Mucosa of descending colon (tissue), 3 donors: ENCODE measurements at regions of chr14 and their contacts with region 1.

Region 1: DNA sequence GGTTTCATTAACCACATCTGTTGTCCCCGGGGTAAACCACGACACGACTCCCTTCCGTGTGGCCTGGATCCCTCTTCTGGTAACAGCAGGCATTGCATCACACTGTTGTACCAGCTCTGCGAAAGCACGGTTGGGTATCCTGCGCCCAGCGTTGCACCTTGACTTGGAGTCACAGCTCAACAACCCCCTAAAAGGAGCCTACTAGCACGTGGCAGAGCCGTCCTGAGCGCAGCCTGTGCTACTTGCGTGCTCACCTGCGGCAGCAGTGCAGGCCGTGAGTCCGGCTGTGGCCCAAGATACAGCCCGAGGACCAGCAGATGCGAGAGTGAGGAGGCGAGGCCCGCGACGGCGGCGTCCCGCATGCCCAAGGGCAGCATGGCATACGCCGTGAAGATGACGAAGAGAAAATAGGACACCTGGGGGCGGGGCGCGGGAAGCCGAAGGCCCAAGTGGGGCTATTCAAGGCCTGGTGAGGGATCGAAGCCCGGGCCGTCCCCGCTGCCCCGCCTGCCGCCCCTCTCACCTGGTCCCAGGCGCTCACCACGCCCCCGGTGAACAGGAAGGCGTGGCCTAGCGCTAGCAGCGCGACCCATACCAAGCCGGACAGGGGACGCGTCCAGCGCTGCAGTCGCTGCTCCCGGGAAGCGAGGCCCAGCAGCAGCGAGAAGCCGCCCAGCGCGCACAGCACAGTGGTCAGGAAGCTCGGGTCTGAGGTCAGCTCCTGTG is 2.4 kb downstream of the ADCY4 start:
- DNase-seq: peak; percentile 76 to 87 (median 80)
- ATAC-seq: peak; percentile 75
- H3K4me3 ChIP-seq: no peak overlapping the region
- H3K4me1 ChIP-seq: peaks cover 36% of the 10 kb centered on the region
- CTCF ChIP-seq: peak; percentile 60

Region 2: GRCh38 chr14:23776288-23776687 is 556.1 kb before region 1 on chr14:
- intact Hi-C with region 1: no loop called
- DNase-seq: no peak
- ATAC-seq: peak; percentile 49
- H3K4me3 ChIP-seq: no peak overlapping the region
- H3K4me1 ChIP-seq: no peaks in the 10 kb centered on the region
- CTCF ChIP-seq: no peak

Region 3: GRCh38 chr14:24146978-24147760 is 185.3 kb before region 1 on chr14 and contains the start of gene RNF31:
- intact Hi-C with region 1: no loop called
- DNase-seq: peak; percentile 97 to 99 (median 99)
- ATAC-seq: peak; percentile 92
- H3K4me3 ChIP-seq: peak within 1 kb of the TSS; percentile 84
- H3K4me1 ChIP-seq: peaks cover 30% of the 10 kb centered on the region
- CTCF ChIP-seq: peak; percentile 24
- total RNA-seq, gene RNF31: 52.8 to 66.2 (median 59.0) TPM

Region 4: DNA sequence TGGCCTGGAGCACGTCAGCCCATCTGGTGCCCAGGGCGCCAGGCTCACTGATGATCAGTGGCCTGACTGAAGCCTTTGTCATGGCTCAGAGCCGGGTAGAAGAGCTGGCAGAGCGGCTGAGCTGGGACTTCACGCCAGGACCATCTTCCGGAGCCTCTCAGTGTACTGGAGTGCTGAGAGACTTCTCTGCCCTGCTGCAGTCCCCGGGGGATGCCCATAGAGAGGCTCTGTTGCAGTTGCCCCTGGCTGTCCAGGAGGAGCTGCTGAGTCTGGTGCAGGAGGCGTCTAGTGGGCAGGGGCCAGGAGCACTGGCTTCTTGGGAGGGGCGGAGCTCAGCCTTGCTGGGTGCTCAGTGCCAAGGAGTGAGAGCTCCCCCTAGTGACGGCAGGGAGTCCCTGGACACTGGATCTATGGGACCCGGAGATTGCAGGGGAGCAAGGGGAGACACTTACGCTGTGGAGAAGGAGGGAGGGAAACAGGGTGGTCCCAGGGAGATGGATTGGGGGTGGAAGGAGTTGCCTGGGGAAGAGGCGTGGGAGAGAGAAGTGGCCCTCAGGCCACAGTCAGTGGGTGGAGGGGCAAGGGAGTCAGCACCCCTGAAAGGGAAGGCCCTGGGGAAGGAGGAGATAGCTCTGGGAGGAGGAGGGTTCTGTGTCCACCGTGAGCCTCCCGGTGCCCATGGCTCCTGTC is 99.3 kb after region 1 on chr14:
- intact Hi-C with region 1: loop called (anchors 5 kb)
- DNase-seq: peak; percentile 93 to 96 (median 93)
- ATAC-seq: peak; percentile 70
- H3K4me3 ChIP-seq: no peak overlapping the region
- H3K4me1 ChIP-seq: peaks cover 42% of the 10 kb centered on the region
- CTCF ChIP-seq: peak; percentile 90